ENCODE measurements at regions of chr17 and their contacts with region 1.

Region 1: DNA sequence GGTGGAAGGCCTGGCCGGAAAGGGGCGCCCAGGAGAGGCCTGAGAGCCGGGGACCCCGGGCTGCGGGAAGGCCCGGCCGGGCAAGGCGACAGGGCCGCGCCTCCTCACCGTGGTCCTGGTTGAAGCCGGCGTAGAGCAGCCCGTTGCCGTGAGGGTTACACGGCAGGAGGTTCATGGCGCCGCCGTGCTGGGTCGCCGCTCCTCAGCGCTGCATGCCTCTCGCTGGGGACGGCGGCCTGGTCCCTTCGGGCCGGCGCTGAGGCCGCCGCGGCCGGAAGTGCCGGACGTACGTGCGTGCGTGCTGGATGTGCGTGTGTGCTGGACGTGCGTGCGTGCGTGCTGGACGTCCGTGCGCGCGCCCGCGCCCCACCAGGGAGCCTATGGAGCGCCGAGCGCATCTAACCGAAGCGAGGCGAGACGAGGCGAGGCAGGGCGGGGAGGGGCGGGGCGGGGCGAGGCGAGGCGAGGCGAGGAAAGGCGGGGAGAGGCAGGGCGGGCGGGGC is at the start of gene WDR45B:
- DNase-seq: peak; percentile 97
- H3K27ac ChIP-seq: peak within 1 kb of the TSS; percentile 97
- CTCF ChIP-seq: no peak

Region 2: DNA sequence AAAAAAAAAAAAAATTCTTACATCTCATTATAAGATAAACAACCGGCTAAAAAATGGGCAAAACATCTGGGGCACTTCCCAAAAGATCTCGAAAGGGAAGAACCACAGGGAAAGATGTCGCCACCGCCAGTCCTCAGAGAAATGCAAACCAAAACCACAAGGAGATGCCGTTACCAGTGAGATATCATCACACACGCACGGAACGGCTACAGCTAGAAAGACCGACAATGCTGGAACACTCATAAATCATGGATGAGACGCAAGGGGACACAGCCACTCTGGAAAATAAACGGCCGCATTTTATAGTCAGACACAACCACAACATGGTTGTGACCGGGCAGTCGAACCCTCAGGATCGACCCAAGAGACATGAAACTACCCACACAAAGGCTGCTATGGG is 24.5 kb before region 1 on chr17:
- CTCF ChIA-PET with region 1: interaction called, 11 read pairs
- POLR2A ChIA-PET with region 1: no interaction called
- DNase-seq: no peak
- H3K27ac ChIP-seq: no peak overlapping the region
- CTCF ChIP-seq: no peak

Measured in RWPE1 (cell line).